ENCODE measurements at regions of chr12 and their contacts with region 1.

Region 1: GRCh38 chr12:67698672-67699581 is 50.4 kb downstream of the DYRK2 start:
- DNase-seq: no peak
- ATAC-seq: peak; percentile 87
- H3K4me3 Mint-ChIP-seq: peak overlapping the region; percentile 74
- H3K27ac Mint-ChIP-seq: peak overlapping the region; percentile 86
- H3K4me1 Mint-ChIP-seq: peaks cover 43% of the 10 kb centered on the region
- H3K27me3 Mint-ChIP-seq: peaks cover 4% of the 10 kb centered on the region
- CTCF ChIP-seq: no peak

Region 2: GRCh38 chr12:66755727-66756395 is 943.1 kb before region 1 on chr12:
- CTCF ChIA-PET with region 1: no interaction called
- POLR2A ChIA-PET with region 1: no interaction called
- intact Hi-C with region 1: no loop called
- DNase-seq: no peak
- ATAC-seq: no peak
- H3K4me3 Mint-ChIP-seq: no peak overlapping the region
- H3K27ac Mint-ChIP-seq: no peak overlapping the region
- H3K4me1 Mint-ChIP-seq: peaks cover 3% of the 10 kb centered on the region
- H3K27me3 Mint-ChIP-seq: peaks cover 9% of the 10 kb centered on the region
- CTCF ChIP-seq: no peak

Region 3: GRCh38 chr12:67355578-67356379 is 343.1 kb before region 1 on chr12:
- CTCF ChIA-PET with region 1: no interaction called
- POLR2A ChIA-PET with region 1: no interaction called
- intact Hi-C with region 1: loop called (anchors 1 kb)
- DNase-seq: no peak
- ATAC-seq: peak; percentile 54
- H3K4me3 Mint-ChIP-seq: no peak overlapping the region
- H3K27ac Mint-ChIP-seq: no peak overlapping the region
- H3K4me1 Mint-ChIP-seq: peaks cover 5% of the 10 kb centered on the region
- H3K27me3 Mint-ChIP-seq: no peaks in the 10 kb centered on the region
- CTCF ChIP-seq: no peak

Region 4: DNA sequence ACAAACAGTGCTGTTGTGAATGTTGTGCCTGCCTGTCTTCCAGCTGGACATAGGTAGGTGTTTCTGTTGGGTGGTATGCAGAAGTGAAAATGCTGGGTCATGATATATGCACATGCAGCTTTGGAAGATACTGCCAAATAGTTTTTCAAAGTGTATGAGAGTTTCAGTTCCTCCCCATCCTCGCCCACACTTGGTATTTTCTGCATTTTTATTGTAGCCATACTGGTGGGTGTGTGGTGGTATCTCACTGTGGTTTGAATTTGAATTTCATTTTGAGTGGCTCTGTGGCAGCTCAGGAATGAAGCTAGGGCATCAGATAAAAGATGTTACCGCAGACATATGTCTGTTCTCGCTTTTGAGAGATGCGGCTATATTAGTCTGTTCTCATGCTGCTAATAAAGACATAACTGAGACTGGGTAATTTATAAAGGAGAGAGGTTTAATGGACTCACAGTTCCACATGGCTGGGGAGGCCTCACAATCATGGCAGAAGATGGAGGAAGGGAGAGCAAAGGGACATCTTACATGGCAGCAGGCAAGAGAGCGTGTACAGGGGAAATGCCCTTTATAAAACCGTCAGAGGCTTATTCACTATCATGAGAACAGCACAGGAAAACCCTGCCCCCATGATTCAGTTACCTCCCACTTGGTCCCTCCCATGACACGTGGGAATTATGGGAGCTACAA is 246.7 kb before region 1 on chr12:
- CTCF ChIA-PET with region 1: no interaction called
- POLR2A ChIA-PET with region 1: no interaction called
- intact Hi-C with region 1: loop called (anchors 1 kb)
- DNase-seq: no peak
- ATAC-seq: peak; percentile 60
- H3K4me3 Mint-ChIP-seq: peak overlapping the region; percentile 17
- H3K27ac Mint-ChIP-seq: peak overlapping the region; percentile 54
- H3K4me1 Mint-ChIP-seq: peaks cover 40% of the 10 kb centered on the region
- H3K27me3 Mint-ChIP-seq: peaks cover 12% of the 10 kb centered on the region
- CTCF ChIP-seq: no peak

Region 5: DNA sequence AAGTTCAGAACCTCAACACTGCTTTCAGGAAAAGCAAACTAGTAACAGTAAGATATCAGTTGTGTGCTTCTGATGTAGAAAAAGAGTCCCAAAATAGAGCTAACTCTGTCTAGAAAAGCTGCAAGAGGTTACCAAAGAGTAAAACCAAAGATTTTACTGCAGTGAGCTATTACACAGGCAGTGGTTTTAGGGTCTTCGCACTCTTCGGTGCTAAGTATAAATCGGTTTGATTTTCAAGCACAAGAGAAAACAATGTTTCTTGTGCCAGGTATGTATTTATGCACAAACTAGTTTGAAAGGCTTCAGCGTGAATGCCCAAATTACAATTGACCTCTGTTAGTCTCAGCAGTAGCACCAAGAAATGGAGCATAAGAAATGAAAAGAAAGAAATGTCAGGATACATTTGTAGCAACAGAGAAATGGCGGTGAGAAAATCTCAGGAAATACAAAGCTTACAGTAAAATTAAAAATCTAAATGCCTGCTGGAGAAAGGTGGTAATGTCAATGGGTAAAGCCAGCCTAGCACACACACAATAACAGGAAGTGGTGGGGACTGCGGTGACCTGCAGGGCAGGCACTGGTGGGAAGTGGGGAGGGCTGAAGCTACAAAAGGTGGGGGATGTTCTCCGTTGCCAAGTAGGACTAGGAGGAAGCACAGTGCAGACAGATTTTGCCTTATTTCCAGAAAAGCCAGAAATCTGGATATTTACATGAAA is 68.4 kb before region 1 on chr12:
- CTCF ChIA-PET with region 1: interaction called, 3 read pairs
- POLR2A ChIA-PET with region 1: interaction called, 3 read pairs
- intact Hi-C with region 1: loop called (anchors 1 kb)
- DNase-seq: peak; percentile 47
- ATAC-seq: peak; percentile 100
- H3K4me3 Mint-ChIP-seq: peak overlapping the region; percentile 61
- H3K27ac Mint-ChIP-seq: peak overlapping the region; percentile 87
- H3K4me1 Mint-ChIP-seq: peaks cover 64% of the 10 kb centered on the region
- H3K27me3 Mint-ChIP-seq: no peaks in the 10 kb centered on the region
- CTCF ChIP-seq: no peak

Region 6: GRCh38 chr12:67758119-67758518 is 59.2 kb after region 1 on chr12:
- CTCF ChIA-PET with region 1: no interaction called
- POLR2A ChIA-PET with region 1: no interaction called
- intact Hi-C with region 1: loop called (anchors 1 kb)
- DNase-seq: no peak
- ATAC-seq: peak; percentile 95
- H3K4me3 Mint-ChIP-seq: no peak overlapping the region
- H3K27ac Mint-ChIP-seq: no peak overlapping the region
- H3K4me1 Mint-ChIP-seq: peaks cover 25% of the 10 kb centered on the region
- H3K27me3 Mint-ChIP-seq: no peaks in the 10 kb centered on the region
- CTCF ChIP-seq: no peak

Region 7: DNA sequence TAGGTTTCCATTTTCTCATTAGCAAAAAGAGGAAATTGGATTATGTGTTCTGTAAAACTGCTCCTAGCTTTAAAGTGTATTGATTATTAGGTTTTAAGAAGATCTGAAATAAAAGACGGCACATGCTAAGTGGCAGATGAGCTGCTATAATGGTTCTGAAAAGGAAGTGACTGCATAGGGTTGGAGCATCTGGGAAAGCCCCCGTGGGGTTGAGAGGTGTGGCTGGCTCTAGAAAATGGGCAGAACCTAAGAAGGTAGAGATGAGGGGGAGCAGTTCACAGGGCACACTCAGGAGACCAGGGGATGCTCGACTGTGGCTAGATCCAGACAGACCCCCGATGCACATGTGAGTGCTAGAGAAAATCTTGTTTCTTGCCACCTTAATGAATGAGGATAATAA is 292.2 kb after region 1 on chr12:
- CTCF ChIA-PET with region 1: no interaction called
- POLR2A ChIA-PET with region 1: no interaction called
- intact Hi-C with region 1: loop called (anchors 5 kb)
- DNase-seq: peak; percentile 32
- ATAC-seq: peak; percentile 90
- H3K4me3 Mint-ChIP-seq: peak overlapping the region; percentile 74
- H3K27ac Mint-ChIP-seq: peak overlapping the region; percentile 94
- H3K4me1 Mint-ChIP-seq: peaks cover 69% of the 10 kb centered on the region
- H3K27me3 Mint-ChIP-seq: no peaks in the 10 kb centered on the region
- CTCF ChIP-seq: no peak

Region 8: DNA sequence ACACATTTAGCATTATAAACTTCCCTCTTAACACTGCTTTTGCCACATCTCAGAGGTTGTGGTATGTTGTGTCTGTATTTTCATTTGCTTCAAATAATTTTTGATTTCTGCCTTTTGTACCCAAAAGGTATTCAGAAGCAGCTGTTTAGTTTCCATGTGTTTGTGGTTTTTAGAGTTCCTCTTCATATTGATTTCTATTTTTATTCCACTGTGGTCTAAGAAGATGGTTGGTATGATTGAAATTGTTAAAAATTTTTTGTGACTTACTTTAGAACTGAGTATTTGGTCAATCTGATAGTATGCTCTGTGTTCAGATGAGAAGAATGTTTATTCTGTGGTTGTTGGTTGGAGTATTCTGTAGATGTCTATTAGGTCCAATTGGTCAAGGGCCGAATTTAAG is 366.8 kb after region 1 on chr12:
- CTCF ChIA-PET with region 1: no interaction called
- POLR2A ChIA-PET with region 1: no interaction called
- intact Hi-C with region 1: no loop called
- DNase-seq: no peak
- ATAC-seq: no peak
- H3K4me3 Mint-ChIP-seq: peak overlapping the region; percentile 35
- H3K27ac Mint-ChIP-seq: no peak overlapping the region
- H3K4me1 Mint-ChIP-seq: peaks cover 40% of the 10 kb centered on the region
- H3K27me3 Mint-ChIP-seq: no peaks in the 10 kb centered on the region
- CTCF ChIP-seq: no peak

Region 9: DNA sequence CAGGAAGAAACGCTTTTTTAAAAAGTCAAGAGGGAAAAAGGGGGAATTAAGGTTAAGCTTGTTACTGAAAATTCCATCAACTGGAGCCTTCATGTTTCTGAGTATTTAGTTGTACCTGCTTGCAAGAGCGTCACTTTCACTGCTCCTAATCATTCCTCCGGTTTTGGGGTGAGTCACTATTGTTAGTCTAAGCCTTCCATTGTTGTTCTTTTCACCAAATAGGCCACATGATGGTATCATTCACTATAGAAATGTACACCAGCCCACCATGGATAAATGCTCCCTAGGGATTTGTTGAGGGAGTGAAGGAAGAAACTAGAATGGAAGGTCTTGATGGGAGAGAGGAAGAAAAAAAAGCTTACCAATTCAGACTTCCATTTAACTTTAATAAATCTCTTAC is 551.5 kb after region 1 on chr12:
- CTCF ChIA-PET with region 1: no interaction called
- POLR2A ChIA-PET with region 1: no interaction called
- intact Hi-C with region 1: no loop called
- DNase-seq: no peak
- ATAC-seq: no peak
- H3K4me3 Mint-ChIP-seq: no peak overlapping the region
- H3K27ac Mint-ChIP-seq: no peak overlapping the region
- H3K4me1 Mint-ChIP-seq: no peaks in the 10 kb centered on the region
- H3K27me3 Mint-ChIP-seq: peaks cover 7% of the 10 kb centered on the region
- CTCF ChIP-seq: no peak